PC-9 (cell line): ENCODE measurements at regions of chrX and their contacts with region 1.

Region 1: DNA sequence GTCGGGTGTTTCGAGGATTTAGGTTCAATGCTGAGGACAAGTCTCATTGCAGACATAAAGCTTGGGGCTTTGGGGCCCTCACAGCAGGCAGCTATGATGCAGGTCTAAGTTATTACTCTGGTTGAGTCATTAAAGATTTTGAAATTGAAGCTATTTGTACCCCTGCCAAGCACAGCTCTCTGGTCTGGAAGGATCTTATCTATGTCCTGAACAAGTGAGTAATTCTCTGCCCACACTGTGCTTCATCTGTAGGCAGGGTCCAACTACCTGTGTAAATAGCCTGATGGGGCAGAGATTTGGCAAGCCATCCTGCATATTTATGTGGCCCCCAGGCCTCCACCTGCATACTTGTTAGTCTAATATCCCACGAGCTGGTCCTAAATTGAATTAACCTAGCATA is 41.4 kb upstream of the MAGEA4 start:
- DNase-seq: peak; percentile 37 to 98
- H3K4me3 ChIP-seq: peak overlapping the region; percentile 32; the same call in 1 of the 2 replicates
- H3K27ac ChIP-seq: peak overlapping the region; percentile 94
- H3K4me1 ChIP-seq: peaks cover 42% of the 10 kb centered on the region
- H3K27me3 ChIP-seq: no peaks in the 10 kb centered on the region
- CTCF ChIP-seq: no peak

Region 2: GRCh38 chrX:151974336-151975227 is 103.3 kb after region 1 on chrX and contains the start of gene GABRE:
- CTCF ChIA-PET with region 1: no interaction called
- POLR2A ChIA-PET with region 1: no interaction called
- intact Hi-C with region 1: loop called (anchors 5 kb)
- DNase-seq: peak in 1 of 2 experiments; percentile 9
- H3K4me3 ChIP-seq: peak within 1 kb of the TSS; percentile 57
- H3K27ac ChIP-seq: peak within 1 kb of the TSS; percentile 8; the same call in 1 of the 2 replicates
- H3K4me1 ChIP-seq: peaks cover 49% of the 10 kb centered on the region
- H3K27me3 ChIP-seq: no peaks in the 10 kb centered on the region
- CTCF ChIP-seq: no peak
- total RNA-seq, gene GABRE: 22.1 and 24.5 TPM in 2 replicates